ENCODE measurements at regions of chr3 and their contacts with region 1.

Region 1: DNA sequence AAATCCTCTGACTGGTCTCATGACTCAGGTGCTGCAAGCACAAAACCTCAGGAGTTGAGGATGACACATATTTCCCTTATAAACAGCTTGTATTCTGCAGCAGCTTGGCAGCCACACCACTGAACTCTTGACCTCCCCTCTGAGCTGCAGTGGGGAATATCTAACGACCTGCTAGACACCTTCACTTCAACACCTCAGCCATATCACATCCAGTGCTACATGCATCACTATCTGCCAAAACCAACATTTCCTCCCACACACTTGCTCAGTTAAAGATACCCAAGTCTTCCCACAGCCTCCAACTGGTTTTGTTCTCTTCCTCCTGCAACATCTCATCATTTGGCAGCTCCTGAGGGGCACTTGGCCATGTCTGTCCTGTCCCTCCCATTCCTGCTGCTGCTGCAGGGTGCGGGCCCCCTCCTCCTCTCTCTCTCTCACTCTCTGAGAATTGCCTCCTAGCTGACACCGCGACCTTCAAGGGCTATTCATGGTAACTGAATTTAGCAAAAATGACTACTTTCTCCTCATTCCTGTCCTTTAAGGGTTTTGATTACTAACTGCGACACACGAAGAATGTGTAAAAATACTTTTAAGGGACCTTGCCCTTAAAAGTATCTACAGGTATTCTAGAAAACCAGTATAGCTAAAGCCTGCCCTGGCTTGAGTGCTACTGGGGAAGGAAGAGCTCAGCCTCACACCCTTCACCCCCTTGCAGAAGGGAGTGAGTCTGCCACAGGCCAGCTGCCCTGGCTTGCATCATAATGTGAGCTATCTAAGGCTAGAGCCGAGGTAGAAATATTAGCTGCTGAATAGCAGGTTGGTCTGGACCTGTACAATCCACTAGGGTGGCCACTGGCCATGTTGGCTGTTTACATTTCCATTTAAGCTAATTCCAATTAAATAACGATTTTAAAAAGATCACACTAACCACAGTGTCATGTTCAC is 5.0 kb upstream of the CCR9 start:
- DNase-seq: peak; percentile 74
- ATAC-seq: peak; percentile 97
- H3K4me3 Mint-ChIP-seq: no peak overlapping the region
- H3K27ac Mint-ChIP-seq: peak overlapping the region; percentile 2
- H3K4me1 Mint-ChIP-seq: peaks cover 22% of the 10 kb centered on the region
- H3K27me3 Mint-ChIP-seq: peaks cover 38% of the 10 kb centered on the region
- CTCF ChIP-seq: no peak

Region 2: DNA sequence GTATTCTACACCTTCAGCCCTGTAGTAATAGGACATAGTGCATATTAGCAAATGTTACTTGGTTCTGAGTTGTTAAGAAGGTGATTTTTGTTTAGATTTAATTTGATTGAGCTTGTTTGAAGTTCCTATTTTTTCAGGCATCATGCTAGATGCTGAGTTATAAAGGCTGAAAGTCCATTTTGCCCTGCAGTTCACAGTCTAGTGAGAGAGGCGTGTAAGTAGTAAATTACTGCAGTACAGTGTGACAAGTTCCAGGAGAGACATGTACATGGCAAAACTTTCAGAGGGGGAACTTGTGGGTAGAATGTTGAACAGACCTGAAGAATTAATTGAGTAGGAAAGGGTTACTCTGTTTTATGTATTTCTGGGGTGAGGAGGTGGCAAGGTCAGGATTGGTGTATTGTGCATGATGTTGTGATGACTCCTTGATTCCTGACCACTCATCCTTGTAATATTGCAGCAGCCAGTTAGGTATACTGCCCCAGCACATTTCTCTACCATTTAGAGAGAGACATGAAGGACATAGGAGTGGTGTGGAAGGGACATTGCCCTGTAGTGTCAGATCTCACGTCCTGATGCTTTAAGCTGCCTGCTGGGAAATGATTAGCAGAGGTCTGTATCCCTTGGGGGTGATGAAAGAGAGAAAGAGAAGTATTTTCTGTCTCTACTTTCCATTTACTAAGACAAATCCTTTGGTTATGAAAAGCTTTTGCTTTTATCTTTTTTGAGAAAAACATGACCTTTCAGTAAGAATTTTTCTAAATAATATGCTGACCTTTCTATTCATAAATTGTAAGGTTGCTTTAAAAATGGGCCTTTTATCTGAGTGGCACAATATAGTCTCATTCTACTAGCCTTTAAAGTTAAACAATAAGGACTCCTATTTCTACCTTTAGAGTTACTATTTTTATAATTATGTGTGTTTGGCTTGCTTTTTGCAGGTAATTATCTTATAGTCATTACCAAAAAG is 175.2 kb before region 1 on chr3:
- CTCF ChIA-PET with region 1: no interaction called
- POLR2A ChIA-PET with region 1: no interaction called
- intact Hi-C with region 1: no loop called
- DNase-seq: no peak
- ATAC-seq: peak; percentile 42
- H3K4me3 Mint-ChIP-seq: no peak overlapping the region
- H3K27ac Mint-ChIP-seq: peak overlapping the region; percentile 71
- H3K4me1 Mint-ChIP-seq: peaks cover 37% of the 10 kb centered on the region
- H3K27me3 Mint-ChIP-seq: no peaks in the 10 kb centered on the region
- CTCF ChIP-seq: no peak

Region 3: GRCh38 chr3:45730409-45731154 is 150.8 kb before region 1 on chr3:
- CTCF ChIA-PET with region 1: no interaction called
- POLR2A ChIA-PET with region 1: no interaction called
- intact Hi-C with region 1: no loop called
- DNase-seq: no peak
- ATAC-seq: no peak
- H3K4me3 Mint-ChIP-seq: no peak overlapping the region
- H3K27ac Mint-ChIP-seq: no peak overlapping the region
- H3K4me1 Mint-ChIP-seq: peaks cover 28% of the 10 kb centered on the region
- H3K27me3 Mint-ChIP-seq: no peaks in the 10 kb centered on the region
- CTCF ChIP-seq: no peak

Region 4: DNA sequence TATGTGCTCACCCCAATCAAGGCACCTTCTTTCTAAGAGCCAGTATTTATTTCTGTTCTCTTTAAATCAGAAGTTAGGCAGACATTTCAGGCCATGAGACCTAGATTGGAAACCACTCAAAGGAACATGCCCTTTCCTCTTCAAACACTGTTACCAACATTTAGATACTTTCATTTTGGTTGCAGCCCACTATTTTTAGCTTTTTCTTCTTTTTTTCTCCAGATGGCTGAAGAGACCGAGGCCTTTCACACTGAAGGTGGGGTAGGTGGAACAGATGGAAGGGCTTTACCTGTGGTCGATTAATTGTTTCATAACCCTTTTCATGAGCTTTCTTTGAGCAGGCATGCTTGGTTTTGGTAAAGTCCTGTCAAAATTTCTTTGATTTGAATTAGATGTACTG is 28.5 kb before region 1 on chr3:
- CTCF ChIA-PET with region 1: no interaction called
- POLR2A ChIA-PET with region 1: no interaction called
- intact Hi-C with region 1: no loop called
- DNase-seq: no peak
- ATAC-seq: no peak
- H3K4me3 Mint-ChIP-seq: no peak overlapping the region
- H3K27ac Mint-ChIP-seq: no peak overlapping the region
- H3K4me1 Mint-ChIP-seq: peaks cover 16% of the 10 kb centered on the region
- H3K27me3 Mint-ChIP-seq: peaks cover 31% of the 10 kb centered on the region
- CTCF ChIP-seq: no peak

Region 5: GRCh38 chr3:45864760-45865519 is 16.4 kb before region 1 on chr3:
- CTCF ChIA-PET with region 1: interaction called, 4 read pairs
- POLR2A ChIA-PET with region 1: interaction called, 5 read pairs
- intact Hi-C with region 1: loop called (anchors 2 kb)
- DNase-seq: peak; percentile 61
- ATAC-seq: peak; percentile 85
- H3K4me3 Mint-ChIP-seq: no peak overlapping the region
- H3K27ac Mint-ChIP-seq: peak overlapping the region; percentile 21
- H3K4me1 Mint-ChIP-seq: peaks cover 46% of the 10 kb centered on the region
- H3K27me3 Mint-ChIP-seq: peaks cover 58% of the 10 kb centered on the region
- CTCF ChIP-seq: no peak

Region 6: GRCh38 chr3:45896956-45897355 is 15.6 kb after region 1 on chr3:
- CTCF ChIA-PET with region 1: no interaction called
- POLR2A ChIA-PET with region 1: no interaction called
- intact Hi-C with region 1: no loop called
- DNase-seq: no peak
- ATAC-seq: no peak
- H3K4me3 Mint-ChIP-seq: no peak overlapping the region
- H3K27ac Mint-ChIP-seq: no peak overlapping the region
- H3K4me1 Mint-ChIP-seq: peaks cover 22% of the 10 kb centered on the region
- H3K27me3 Mint-ChIP-seq: peaks cover 30% of the 10 kb centered on the region
- CTCF ChIP-seq: no peak